ENCODE measurements at regions of chr1 and their contacts with region 1.

Region 1: DNA sequence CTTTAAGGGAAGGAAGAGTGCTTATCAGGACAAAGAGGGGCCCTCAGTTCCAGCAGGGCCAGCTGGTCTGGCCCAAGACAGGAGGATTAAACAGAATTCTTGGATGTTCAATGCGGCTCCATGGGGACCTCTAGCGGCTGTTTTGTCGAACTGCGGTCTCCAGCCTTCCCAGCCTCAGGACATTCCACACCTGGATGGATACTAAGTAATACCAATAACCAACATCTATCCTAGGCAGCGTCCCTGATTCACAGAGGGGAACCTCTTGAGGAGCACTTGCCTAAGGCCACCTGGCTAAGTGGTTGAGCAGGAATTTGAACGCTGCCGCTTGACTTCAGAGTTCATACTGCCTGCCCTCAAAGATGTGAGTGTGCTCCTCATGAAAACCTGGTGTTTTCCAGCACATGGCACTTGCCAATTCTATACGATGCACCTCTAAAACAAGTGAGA is 15.5 kb upstream of the CD247 start:
- DNase-seq: peak; percentile 74
- ATAC-seq: peak; percentile 82
- H3K4me3 Mint-ChIP-seq: no peak overlapping the region
- H3K27ac Mint-ChIP-seq: no peak overlapping the region
- H3K4me1 Mint-ChIP-seq: peaks cover 7% of the 10 kb centered on the region
- H3K27me3 Mint-ChIP-seq: peaks cover 6% of the 10 kb centered on the region

Region 2: GRCh38 chr1:167270349-167271092 is 263.4 kb before region 1 on chr1:
- CTCF ChIA-PET with region 1: interaction called, 40 read pairs
- POLR2A ChIA-PET with region 1: no interaction called
- DNase-seq: no peak
- ATAC-seq: no peak
- H3K4me3 Mint-ChIP-seq: no peak overlapping the region
- H3K27ac Mint-ChIP-seq: no peak overlapping the region
- H3K4me1 Mint-ChIP-seq: peaks cover 20% of the 10 kb centered on the region
- H3K27me3 Mint-ChIP-seq: no peaks in the 10 kb centered on the region

Region 3: DNA sequence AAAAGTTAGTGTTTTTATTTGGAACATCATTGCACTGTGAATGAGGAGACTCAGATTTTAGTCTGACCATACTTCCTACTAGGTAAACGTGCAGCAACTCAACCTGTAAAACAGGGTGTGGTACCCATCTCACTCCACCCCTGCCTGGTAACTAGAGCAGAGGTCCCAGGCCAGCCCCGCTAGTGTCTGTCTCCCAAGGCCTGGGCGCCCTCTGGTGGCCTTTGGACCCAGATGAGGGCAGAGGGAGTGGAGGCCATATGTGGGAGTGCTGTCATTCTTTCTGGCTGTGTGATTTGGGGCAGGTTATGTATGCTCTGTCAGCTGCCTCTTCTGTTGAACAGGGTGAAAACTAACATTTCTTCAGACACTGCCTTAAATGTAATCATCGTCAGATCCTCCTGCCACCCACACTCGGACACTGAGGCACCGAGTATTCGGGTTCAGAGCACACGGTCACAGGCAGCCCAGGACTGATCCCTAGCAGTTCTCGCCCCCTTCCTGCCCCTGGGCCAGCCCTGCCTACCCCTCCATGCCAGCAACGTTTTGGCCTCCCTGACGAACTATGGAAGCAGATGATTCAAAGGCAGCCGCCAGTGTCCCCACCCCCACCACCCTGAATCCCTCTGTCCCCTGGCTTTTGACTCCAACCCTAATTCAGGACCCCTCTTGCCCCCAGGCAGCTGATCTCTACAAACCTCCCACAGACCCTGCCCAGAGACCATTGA is 91.6 kb before region 1 on chr1:
- CTCF ChIA-PET with region 1: interaction called, 34 read pairs
- POLR2A ChIA-PET with region 1: no interaction called
- DNase-seq: peak; percentile 91
- ATAC-seq: peak; percentile 85
- H3K4me3 Mint-ChIP-seq: no peak overlapping the region
- H3K27ac Mint-ChIP-seq: peak overlapping the region; percentile 81
- H3K4me1 Mint-ChIP-seq: peaks cover 94% of the 10 kb centered on the region
- H3K27me3 Mint-ChIP-seq: no peaks in the 10 kb centered on the region

Region 4: GRCh38 chr1:167474191-167474716 is 59.6 kb before region 1 on chr1:
- CTCF ChIA-PET with region 1: interaction called, 20 read pairs
- POLR2A ChIA-PET with region 1: no interaction called
- DNase-seq: peak; percentile 52
- ATAC-seq: peak; percentile 77
- H3K4me3 Mint-ChIP-seq: peak overlapping the region; percentile 53
- H3K27ac Mint-ChIP-seq: peak overlapping the region; percentile 79
- H3K4me1 Mint-ChIP-seq: peaks cover 83% of the 10 kb centered on the region
- H3K27me3 Mint-ChIP-seq: no peaks in the 10 kb centered on the region

Region 5: GRCh38 chr1:167517535-167518330 is 16.1 kb before region 1 on chr1:
- CTCF ChIA-PET with region 1: interaction called, 112 read pairs
- POLR2A ChIA-PET with region 1: interaction called, 6 read pairs
- DNase-seq: peak; percentile 85
- ATAC-seq: peak; percentile 81
- H3K4me3 Mint-ChIP-seq: peak overlapping the region; percentile 93
- H3K27ac Mint-ChIP-seq: peak overlapping the region; percentile 98
- H3K4me1 Mint-ChIP-seq: peaks cover 50% of the 10 kb centered on the region
- H3K27me3 Mint-ChIP-seq: no peaks in the 10 kb centered on the region

Measured in activated CD8-positive, alpha-beta T cell treated with anti-CD3 and anti-CD28 coated beads, Interleukin-2, amount 10 ng/mL, durations not matched to agents 7 days and 5 days (primary cell).